AG04450 (cell line): ENCODE measurements at regions of chr3 and their contacts with region 1.

Region 1: DNA sequence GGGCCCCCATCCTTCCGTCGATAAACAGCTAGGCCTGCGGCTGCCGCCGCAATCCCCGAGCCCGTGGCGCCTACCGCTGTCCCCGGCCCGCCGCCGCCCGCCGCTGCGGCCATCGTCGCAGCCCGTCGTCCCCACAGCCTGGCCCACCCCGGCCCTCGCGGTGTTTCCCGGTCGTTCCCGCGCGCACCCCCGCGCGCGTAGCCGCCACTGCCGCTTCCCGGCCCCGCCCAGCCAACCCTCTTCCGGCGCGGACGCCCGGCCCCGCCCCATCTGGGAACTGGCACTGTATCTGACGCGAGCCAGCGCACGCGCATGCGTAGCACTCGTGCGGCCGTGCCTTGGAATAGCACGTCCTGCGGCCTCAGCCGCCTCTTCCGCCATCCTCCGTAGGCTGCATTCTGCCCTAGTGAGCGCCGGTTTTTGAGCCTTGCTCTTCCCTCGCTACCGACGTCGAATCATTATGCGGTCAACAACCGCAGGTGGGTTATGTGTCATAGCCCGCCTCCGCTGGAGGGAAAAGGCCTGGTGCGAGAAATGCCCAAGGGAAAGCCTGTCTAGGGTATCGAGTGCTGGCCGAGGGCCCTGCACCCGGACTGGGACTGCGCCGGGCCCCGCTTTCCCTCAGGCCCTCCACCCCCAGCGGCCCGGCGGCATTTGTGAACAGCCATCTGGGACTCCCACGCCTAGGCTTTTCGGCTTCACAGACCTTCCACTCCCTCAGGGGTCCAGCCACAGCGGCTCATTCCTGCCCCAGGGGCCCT is at the start of gene SMARCC1:
- DNase-seq: peak; percentile 93
- H3K4me3 ChIP-seq: peak within 1 kb of the TSS; percentile 89
- H3K27ac ChIP-seq: peak within 1 kb of the TSS; percentile 98
- H3K27me3 ChIP-seq: no peaks in the 10 kb centered on the region
- CTCF ChIP-seq: no peak
- polyA plus RNA-seq, gene SMARCC1: 34.3 and 38.5 TPM in 2 replicates

Region 2: DNA sequence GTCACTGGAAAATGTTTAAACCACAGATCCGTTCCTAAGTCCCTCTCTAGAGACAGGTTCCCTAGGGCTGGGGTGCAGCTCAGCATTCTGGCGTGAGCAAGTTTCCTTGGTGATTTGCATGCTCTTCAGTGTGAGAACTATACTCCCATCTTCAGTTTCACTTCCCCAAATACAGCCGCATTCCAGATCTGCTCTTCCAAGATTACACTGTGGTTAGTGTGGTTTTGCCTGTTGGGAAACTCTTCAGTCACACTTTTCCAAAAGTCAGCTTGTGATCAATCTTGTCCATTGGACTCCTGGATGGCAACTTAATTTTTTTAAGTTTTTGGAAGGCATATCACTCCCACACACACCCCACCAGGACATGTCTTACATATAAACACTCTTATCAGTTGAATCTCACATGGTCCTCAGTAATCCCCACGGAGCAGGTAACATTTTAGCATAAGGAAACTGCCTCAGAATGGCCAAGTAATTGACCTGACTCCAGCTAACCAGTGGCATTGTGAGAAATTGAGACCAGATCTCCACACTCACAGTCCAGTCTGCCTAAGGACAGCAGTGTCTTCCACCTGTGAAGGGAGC is 434.6 kb before region 1 on chr3:
- CTCF ChIA-PET with region 1: no interaction called
- POLR2A ChIA-PET with region 1: interaction called, 15 read pairs
- DNase-seq: peak; percentile 55
- H3K4me3 ChIP-seq: no peak overlapping the region
- H3K27ac ChIP-seq: peak overlapping the region; percentile 54
- H3K27me3 ChIP-seq: no peaks in the 10 kb centered on the region
- CTCF ChIP-seq: no peak